IMR-90 (cell line): ENCODE measurements at regions of chr7 and their contacts with region 1.

Region 1: GRCh38 chr7:84009051-84009450 is 185.5 kb downstream of the SEMA3A start:
- DNase-seq: peak; percentile 68
- ATAC-seq: peak; percentile 46
- H3K4me3 ChIP-seq: no peak overlapping the region
- H3K27ac ChIP-seq: no peak overlapping the region
- H3K4me1 ChIP-seq: peaks cover 3% of the 10 kb centered on the region
- H3K27me3 ChIP-seq: no peaks in the 10 kb centered on the region
- CTCF ChIP-seq: no peak
- POLR2A ChIP-seq: no peak
- RAD21 ChIP-seq: no peak

Region 2: DNA sequence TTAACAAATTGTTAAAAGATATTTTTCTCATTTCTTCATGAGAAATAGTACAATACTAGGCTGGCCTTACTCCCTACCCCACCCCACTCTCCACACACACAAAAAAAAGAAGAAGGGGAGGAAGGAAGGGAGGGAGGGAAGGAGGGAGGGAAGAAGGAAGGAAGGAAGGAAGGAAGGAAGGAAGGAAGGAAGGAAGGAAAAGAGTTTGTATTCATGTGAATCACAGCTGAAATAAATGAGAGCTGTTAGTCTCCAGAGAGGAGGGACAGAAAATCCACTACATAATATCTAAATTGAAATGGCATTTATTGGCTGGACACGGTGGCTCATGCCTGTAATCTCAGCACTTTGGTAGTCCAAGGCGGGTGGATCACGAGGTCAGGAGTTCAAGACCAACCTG is 127.8 kb after region 1 on chr7:
- CTCF ChIA-PET with region 1: no interaction called
- POLR2A ChIA-PET with region 1: interaction called, 12 read pairs
- dilution Hi-C with region 1: no loop called
- in situ Hi-C with region 1: no loop called
- intact Hi-C with region 1: no loop called
- DNase-seq: no peak
- ATAC-seq: no peak
- H3K4me3 ChIP-seq: no peak overlapping the region
- H3K27ac ChIP-seq: peak overlapping the region; percentile 87; the same call in 1 of the 2 replicates
- H3K4me1 ChIP-seq: peaks cover 4% of the 10 kb centered on the region; the same call in 1 of the 2 replicates
- H3K27me3 ChIP-seq: no peaks in the 10 kb centered on the region
- CTCF ChIP-seq: no peak
- POLR2A ChIP-seq: no peak
- RAD21 ChIP-seq: no peak

Region 3: GRCh38 chr7:84176716-84177115 is 167.7 kb after region 1 on chr7:
- CTCF ChIA-PET with region 1: no interaction called
- POLR2A ChIA-PET with region 1: no interaction called
- dilution Hi-C with region 1: no loop called
- in situ Hi-C with region 1: no loop called
- intact Hi-C with region 1: loop called (anchors 5 kb)
- DNase-seq: peak; percentile 35
- ATAC-seq: no peak; the same call in 1 of the 2 replicates
- H3K4me3 ChIP-seq: no peak overlapping the region
- H3K27ac ChIP-seq: no peak overlapping the region
- H3K4me1 ChIP-seq: no peaks in the 10 kb centered on the region; the same call in 1 of the 2 replicates
- H3K27me3 ChIP-seq: no peaks in the 10 kb centered on the region
- CTCF ChIP-seq: no peak
- POLR2A ChIP-seq: no peak
- RAD21 ChIP-seq: no peak